ENCODE measurements at regions of chr1 and their contacts with region 1.

Region 1: GRCh38 chr1:175734642-175735041 is 8.8 kb downstream of the TNR start:
- DNase-seq: no peak
- H3K4me3 ChIP-seq: no peak overlapping the region
- H3K4me3 Mint-ChIP-seq: no peak overlapping the region
- H3K27ac Mint-ChIP-seq: no peak overlapping the region
- H3K4me1 ChIP-seq: no peaks in the 10 kb centered on the region
- H3K4me1 Mint-ChIP-seq: no peaks in the 10 kb centered on the region
- H3K27me3 ChIP-seq: no peaks in the 10 kb centered on the region; the same call in 1 of the 2 replicates
- H3K27me3 Mint-ChIP-seq: peaks cover 13% of the 10 kb centered on the region
- CTCF ChIP-seq: no peak

Region 2: GRCh38 chr1:175673371-175674150 is 61.1 kb before region 1 on chr1:
- CTCF ChIA-PET with region 1: no interaction called
- POLR2A ChIA-PET with region 1: no interaction called
- intact Hi-C with region 1: loop called (anchors 10 kb)
- DNase-seq: no peak
- H3K4me3 ChIP-seq: no peak overlapping the region
- H3K4me3 Mint-ChIP-seq: no peak overlapping the region
- H3K27ac Mint-ChIP-seq: no peak overlapping the region
- H3K4me1 ChIP-seq: no peaks in the 10 kb centered on the region
- H3K4me1 Mint-ChIP-seq: no peaks in the 10 kb centered on the region
- H3K27me3 ChIP-seq: peaks cover 3% of the 10 kb centered on the region
- H3K27me3 Mint-ChIP-seq: peaks cover 20% of the 10 kb centered on the region
- CTCF ChIP-seq: no peak

Region 3: DNA sequence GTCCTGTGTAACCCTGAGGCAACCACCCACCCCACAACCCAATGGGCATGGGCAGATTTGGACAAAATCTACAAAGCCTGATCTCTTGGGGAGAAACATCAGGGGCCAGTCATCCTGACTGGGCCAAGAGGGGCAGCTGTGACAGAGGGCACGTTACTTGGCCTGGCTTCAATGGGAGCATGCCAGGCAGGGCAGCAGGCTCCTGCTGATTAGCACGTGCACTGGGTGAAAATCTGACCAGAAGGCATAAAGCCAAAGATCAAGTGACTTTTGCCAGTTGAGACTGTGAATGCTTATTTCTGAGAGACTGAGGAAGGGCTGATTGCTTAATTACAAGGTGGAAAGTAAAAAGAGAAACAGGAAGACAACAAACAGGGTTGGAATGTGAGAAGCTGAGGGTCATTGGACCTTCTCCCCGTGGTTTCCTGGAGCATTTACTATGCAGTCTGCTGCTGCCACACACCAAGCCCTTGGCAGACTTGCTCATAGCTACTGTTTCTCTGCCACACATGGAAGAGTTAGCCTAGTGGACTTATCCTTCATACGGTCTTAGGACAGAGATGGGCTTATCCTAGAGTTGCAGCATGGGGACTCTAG is 48.6 kb after region 1 on chr1:
- CTCF ChIA-PET with region 1: no interaction called
- POLR2A ChIA-PET with region 1: no interaction called
- intact Hi-C with region 1: no loop called
- DNase-seq: no peak
- H3K4me3 ChIP-seq: no peak overlapping the region
- H3K4me3 Mint-ChIP-seq: no peak overlapping the region
- H3K27ac Mint-ChIP-seq: no peak overlapping the region
- H3K4me1 ChIP-seq: no peaks in the 10 kb centered on the region
- H3K4me1 Mint-ChIP-seq: no peaks in the 10 kb centered on the region
- H3K27me3 ChIP-seq: no peaks in the 10 kb centered on the region; the same call in 1 of the 2 replicates
- H3K27me3 Mint-ChIP-seq: peaks cover 4% of the 10 kb centered on the region
- CTCF ChIP-seq: no peak

Measured in Caco-2 (cell line).